ENCODE measurements at regions of chr12 and their contacts with region 1.

Region 1: GRCh38 chr12:120228291-120229070 is 27.6 kb upstream of the RPLP0 start:
- DNase-seq: peak; percentile 71 to 87
- ATAC-seq: peak; percentile 30 to 48
- H3K4me3 ChIP-seq: peak overlapping the region in 3 of 4 donors; percentile 6 to 27 (median 10)
- H3K27ac ChIP-seq: peak overlapping the region; percentile 97 to 99 (median 98)
- H3K4me1 ChIP-seq: peaks cover 81 to 86% of the 10 kb centered on the region in 2 donors
- H3K27me3 ChIP-seq: no peaks in the 10 kb centered on the region
- CTCF ChIP-seq: peak; percentile 97 to 99 (median 98)
- POLR2A ChIP-seq: no peak

Region 2: GRCh38 chr12:120265473-120266179 is 37.1 kb after region 1 on chr12 and contains the start of gene PXN:
- in situ Hi-C with region 1: loop called (anchors 5 kb)
- intact Hi-C with region 1: loop called (anchors 1 kb)
- DNase-seq: peak; percentile 78 to 86
- ATAC-seq: peak; percentile 74
- H3K4me3 ChIP-seq: peak within 1 kb of the TSS; percentile 86 to 93 (median 90)
- H3K27ac ChIP-seq: peak within 1 kb of the TSS; percentile 93 to 99 (median 98)
- H3K4me1 ChIP-seq: peaks cover 37 to 41% of the 10 kb centered on the region in 2 donors
- H3K27me3 ChIP-seq: no peaks in the 10 kb centered on the region
- CTCF ChIP-seq: peak; percentile 81 to 96 (median 93)
- POLR2A ChIP-seq: peak; percentile 90 to 92
- total RNA-seq, gene PXN: 48.8 to 102 (median 77.9) TPM